ENCODE measurements at regions of chr1 and their contacts with region 1.

Region 1: GRCh38 chr1:182588500-182589452 is at the start of gene RNASEL:
- DNase-seq: peak; percentile 24 to 87 (median 51)
- ATAC-seq: peak; percentile 92
- H3K4me3 ChIP-seq: peak within 1 kb of the TSS; percentile 78 to 95
- H3K4me3 Mint-ChIP-seq: peak within 1 kb of the TSS; percentile 94
- H3K27ac ChIP-seq: peak within 1 kb of the TSS; percentile 96 to 99
- H3K27ac Mint-ChIP-seq: peak within 1 kb of the TSS; percentile 99
- H3K4me1 ChIP-seq: peaks cover 44% of the 10 kb centered on the region
- H3K4me1 Mint-ChIP-seq: peaks cover 52% of the 10 kb centered on the region
- H3K27me3 ChIP-seq: no peaks in the 10 kb centered on the region
- H3K27me3 Mint-ChIP-seq: peaks cover 3% of the 10 kb centered on the region
- CTCF ChIP-seq: no peak
- total RNA-seq, gene RNASEL: 1.5 to 1.7 TPM

Region 2: DNA sequence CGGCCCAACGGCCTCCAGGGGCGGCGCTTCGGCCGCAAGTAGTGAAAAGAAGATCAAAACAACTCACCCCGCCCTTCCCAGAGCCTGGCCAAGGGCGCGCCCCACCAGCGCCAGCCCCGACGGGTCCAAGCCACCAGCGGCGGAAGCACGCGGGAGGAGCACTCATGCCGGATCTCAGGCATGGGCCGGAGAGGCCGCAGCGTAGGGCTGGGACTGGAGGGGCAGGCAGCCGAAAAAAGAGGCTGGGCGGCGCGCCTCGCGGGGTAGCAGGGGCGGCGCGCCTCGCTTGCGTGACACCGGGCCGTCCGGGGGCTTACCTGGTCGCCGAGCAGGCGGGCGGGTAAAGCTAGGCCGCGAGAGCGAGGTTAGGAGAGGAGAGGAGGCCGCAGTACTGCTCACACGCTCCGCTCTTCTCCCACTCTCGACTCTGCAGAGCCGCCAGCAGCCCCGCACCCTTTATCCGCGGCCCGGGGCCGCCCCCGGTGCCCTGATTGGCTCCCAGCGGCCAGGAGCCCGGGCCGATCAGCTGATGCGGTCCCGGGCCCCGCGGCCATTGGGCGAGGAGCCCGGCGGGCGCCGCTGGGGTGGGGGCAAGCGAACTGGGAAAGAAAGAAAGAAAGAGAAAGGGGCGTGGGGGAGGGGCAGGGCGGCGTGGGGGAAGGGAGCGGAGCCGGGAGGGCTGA is 197.3 kb before region 1 on chr1 and contains the start of gene GLUL:
- CTCF ChIA-PET with region 1: no interaction called
- POLR2A ChIA-PET with region 1: no interaction called
- intact Hi-C with region 1: loop called in 1 of 2 experiments (anchors 2 kb)
- DNase-seq: peak; percentile 24 to 80 (median 55)
- ATAC-seq: peak; percentile 64
- H3K4me3 ChIP-seq: peak within 1 kb of the TSS; percentile 62 to 76
- H3K4me3 Mint-ChIP-seq: peak within 1 kb of the TSS; percentile 92
- H3K27ac ChIP-seq: peak within 1 kb of the TSS; percentile 32 to 36
- H3K27ac Mint-ChIP-seq: peak within 1 kb of the TSS; percentile 80
- H3K4me1 ChIP-seq: peaks cover 13% of the 10 kb centered on the region
- H3K4me1 Mint-ChIP-seq: peaks cover 25% of the 10 kb centered on the region
- H3K27me3 ChIP-seq: peaks cover 0 to 2% of the 10 kb centered on the region in 2 experiments
- H3K27me3 Mint-ChIP-seq: peaks cover 19% of the 10 kb centered on the region
- CTCF ChIP-seq: no peak
- total RNA-seq, gene GLUL: 27.3 to 29.7 TPM

Region 3: DNA sequence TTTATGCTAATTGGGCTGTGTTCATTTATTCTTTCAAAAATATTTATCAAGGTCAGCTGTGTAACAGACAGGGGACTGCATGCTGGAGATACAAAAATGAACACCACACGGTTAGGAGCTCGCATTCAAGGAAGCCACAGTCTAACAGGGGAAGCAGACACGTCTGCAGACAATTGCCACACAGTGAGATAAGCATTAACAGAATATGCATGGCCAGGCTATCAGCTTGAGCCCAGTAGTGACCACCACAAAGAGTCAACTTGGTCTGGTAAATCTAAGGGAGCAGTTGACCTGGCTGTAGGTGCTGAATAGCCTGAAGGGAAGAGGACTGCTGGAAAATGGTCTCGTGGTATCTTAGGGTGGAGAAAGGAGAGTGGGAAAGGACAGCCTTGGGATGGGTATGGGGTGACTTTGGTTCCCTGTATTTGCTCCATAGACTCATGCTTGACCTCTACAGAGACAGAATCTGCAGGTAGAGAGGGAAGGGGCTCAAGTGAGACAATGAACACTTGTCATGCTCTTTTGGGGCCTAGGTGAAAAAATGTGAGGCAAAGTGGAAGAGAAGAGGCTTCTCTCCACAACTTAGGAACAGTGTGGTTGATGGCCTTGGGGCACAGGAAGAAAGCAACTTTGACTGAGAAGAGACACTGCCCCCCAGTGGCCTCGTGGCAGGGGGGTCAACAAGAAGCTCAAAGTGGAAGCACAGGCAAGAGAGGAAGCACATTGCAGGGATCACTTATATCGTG is 193.2 kb after region 1 on chr1:
- CTCF ChIA-PET with region 1: interaction called, 581 read pairs
- POLR2A ChIA-PET with region 1: interaction called, 3 read pairs
- intact Hi-C with region 1: no loop called
- DNase-seq: peak; percentile 39 to 77 (median 66)
- ATAC-seq: peak; percentile 80
- H3K4me3 ChIP-seq: no peak overlapping the region
- H3K4me3 Mint-ChIP-seq: no peak overlapping the region
- H3K27ac ChIP-seq: no peak overlapping the region
- H3K27ac Mint-ChIP-seq: no peak overlapping the region
- H3K4me1 ChIP-seq: no peaks in the 10 kb centered on the region
- H3K4me1 Mint-ChIP-seq: peaks cover 3% of the 10 kb centered on the region
- H3K27me3 ChIP-seq: no peaks in the 10 kb centered on the region
- H3K27me3 Mint-ChIP-seq: peaks cover 2% of the 10 kb centered on the region
- CTCF ChIP-seq: peak; percentile 62

Region 4: GRCh38 chr1:182789138-182790076 is 200.6 kb after region 1 on chr1 and contains the start of gene NPL:
- CTCF ChIA-PET with region 1: interaction called, 581 read pairs
- POLR2A ChIA-PET with region 1: interaction called, 5 read pairs
- intact Hi-C with region 1: loop called in 1 of 2 experiments (anchors 2 kb)
- DNase-seq: peak; percentile 65 to 92 (median 83)
- ATAC-seq: peak; percentile 96
- H3K4me3 ChIP-seq: peak within 1 kb of the TSS; percentile 69 to 75
- H3K4me3 Mint-ChIP-seq: peak within 1 kb of the TSS; percentile 91
- H3K27ac ChIP-seq: peak within 1 kb of the TSS; percentile 45 to 57
- H3K27ac Mint-ChIP-seq: peak within 1 kb of the TSS; percentile 76
- H3K4me1 ChIP-seq: peaks cover 12% of the 10 kb centered on the region
- H3K4me1 Mint-ChIP-seq: peaks cover 14% of the 10 kb centered on the region
- H3K27me3 ChIP-seq: no peaks in the 10 kb centered on the region
- H3K27me3 Mint-ChIP-seq: no peaks in the 10 kb centered on the region
- CTCF ChIP-seq: no peak
- total RNA-seq, gene NPL: 1.3 to 2.1 TPM